Adrenal gland (tissue), 19 donors: ENCODE measurements at regions of chr4 and their contacts with region 1.

Region 1: GRCh38 chr4:82630079-82630478 is 68.3 kb upstream of the TMEM150C start:
- DNase-seq: no peak
- H3K4me3 ChIP-seq: no peak overlapping the region
- H3K27ac ChIP-seq: no peak overlapping the region
- H3K4me1 ChIP-seq: no peaks in the 10 kb centered on the region
- H3K27me3 ChIP-seq: no peaks in the 10 kb centered on the region
- CTCF ChIP-seq: no peak
- POLR2A ChIP-seq: no peak

Region 2: DNA sequence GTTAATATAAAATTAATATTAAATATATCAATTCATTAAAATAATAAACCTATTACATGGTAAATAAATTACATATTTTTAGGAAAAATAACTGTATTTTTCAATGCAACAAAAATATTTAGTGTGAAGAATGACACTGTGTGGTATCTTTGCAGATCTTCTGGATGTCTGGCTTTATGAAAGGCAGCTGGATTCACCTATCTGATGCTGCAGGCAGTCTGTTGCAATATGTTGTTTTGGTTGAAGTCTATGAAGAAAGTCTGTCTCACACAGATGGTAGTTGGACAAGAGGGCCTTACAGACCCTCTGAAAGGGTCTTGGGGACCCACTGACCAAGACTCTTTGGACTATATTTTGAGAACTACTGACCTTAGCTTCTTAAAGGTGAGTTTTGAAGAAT is 20.8 kb after region 1 on chr4:
- intact Hi-C with region 1: loop called in 1 of 2 experiments (anchors 2 kb)
- DNase-seq: no peak
- H3K4me3 ChIP-seq: no peak overlapping the region
- H3K27ac ChIP-seq: no peak overlapping the region
- H3K4me1 ChIP-seq: peaks cover 0 to 8% of the 10 kb centered on the region in 2 donors
- H3K27me3 ChIP-seq: no peaks in the 10 kb centered on the region
- CTCF ChIP-seq: no peak
- POLR2A ChIP-seq: no peak